Mammary epithelial cell (primary cell): ENCODE measurements at regions of chr18 and their contacts with region 1.

Region 1: GRCh38 chr18:58615140-58616132 is 13.5 kb downstream of the ALPK2 start:
- DNase-seq: peak; percentile 46
- H3K4me3 ChIP-seq: no peak overlapping the region
- H3K27ac ChIP-seq: no peak overlapping the region
- H3K4me1 ChIP-seq: peaks cover 18% of the 10 kb centered on the region
- H3K27me3 ChIP-seq: no peaks in the 10 kb centered on the region
- CTCF ChIP-seq: no peak

Region 2: DNA sequence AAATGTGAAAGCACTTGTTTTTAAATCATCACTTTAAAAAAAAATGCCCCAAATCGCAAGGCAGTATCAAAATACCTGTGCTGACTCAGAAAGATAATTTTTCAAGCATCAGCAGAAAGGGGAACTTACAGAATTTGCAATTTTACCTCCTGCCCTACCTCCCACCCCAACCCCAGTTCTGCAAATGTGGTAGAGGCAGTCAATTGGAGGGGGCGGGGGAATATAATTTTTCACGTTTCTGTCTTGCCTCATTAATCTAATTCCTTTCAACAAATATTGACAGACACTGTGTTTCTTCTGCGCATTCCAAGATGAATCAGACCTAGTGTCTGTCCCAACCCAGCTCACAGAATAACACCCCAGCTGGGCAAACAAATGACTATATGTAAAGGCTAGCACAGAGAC is 63.4 kb before region 1 on chr18:
- CTCF ChIA-PET with region 1: no interaction called
- dilution Hi-C with region 1: no loop called
- in situ Hi-C with region 1: no loop called
- intact Hi-C with region 1: no loop called
- DNase-seq: no peak
- H3K4me3 ChIP-seq: no peak overlapping the region
- H3K27ac ChIP-seq: no peak overlapping the region
- H3K4me1 ChIP-seq: peaks cover 6% of the 10 kb centered on the region
- H3K27me3 ChIP-seq: no peaks in the 10 kb centered on the region
- CTCF ChIP-seq: no peak

Region 3: GRCh38 chr18:58661423-58661822 is 46.0 kb after region 1 on chr18:
- CTCF ChIA-PET with region 1: no interaction called
- dilution Hi-C with region 1: loop called (anchors 5 kb)
- in situ Hi-C with region 1: no loop called
- intact Hi-C with region 1: no loop called
- DNase-seq: no peak
- H3K4me3 ChIP-seq: no peak overlapping the region
- H3K27ac ChIP-seq: no peak overlapping the region
- H3K4me1 ChIP-seq: no peaks in the 10 kb centered on the region
- H3K27me3 ChIP-seq: no peaks in the 10 kb centered on the region
- CTCF ChIP-seq: peak in 1 of 2 donors; percentile 46